A673 (cell line): ENCODE measurements at regions of chr19 and their contacts with region 1.

Region 1: DNA sequence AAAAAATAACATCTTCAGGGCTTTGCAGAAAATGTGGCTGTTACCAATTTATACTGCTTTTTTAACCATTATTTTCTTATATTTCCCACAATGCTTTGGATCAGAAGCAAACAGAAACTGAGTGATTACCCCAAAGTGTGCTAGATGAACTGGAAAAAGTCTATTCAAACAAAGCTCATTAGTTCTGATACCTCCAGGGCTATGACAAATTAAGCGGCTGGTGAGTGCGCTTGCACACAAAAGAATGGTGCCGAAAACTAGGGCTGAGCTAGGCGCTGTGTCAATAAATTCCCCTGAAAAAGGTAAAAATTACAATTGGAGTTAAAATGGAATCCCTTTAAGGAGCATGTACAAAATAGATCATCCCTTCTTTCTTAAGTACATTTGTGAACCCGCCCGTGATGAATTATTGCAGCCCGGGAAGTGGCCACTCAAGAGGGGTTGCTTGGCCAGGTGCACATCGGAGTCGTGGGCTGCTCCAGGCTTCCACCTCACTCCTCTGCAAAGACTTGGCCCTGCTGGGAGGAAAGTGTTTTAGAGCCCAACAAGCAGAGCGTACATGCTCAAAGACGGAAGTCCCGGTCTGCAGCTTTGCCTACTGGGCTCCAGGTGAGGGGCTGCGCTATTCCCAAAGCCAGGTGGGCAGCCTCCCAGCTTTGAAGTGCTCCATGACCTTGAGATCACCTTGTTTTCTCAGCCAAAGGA is 164.0 kb upstream of the ZNF507 start:
- DNase-seq: no peak
- H3K4me3 ChIP-seq: no peak overlapping the region
- H3K27ac ChIP-seq: no peak overlapping the region
- H3K4me1 ChIP-seq: no peaks in the 10 kb centered on the region
- H3K27me3 ChIP-seq: no peaks in the 10 kb centered on the region
- CTCF ChIP-seq: no peak

Region 2: DNA sequence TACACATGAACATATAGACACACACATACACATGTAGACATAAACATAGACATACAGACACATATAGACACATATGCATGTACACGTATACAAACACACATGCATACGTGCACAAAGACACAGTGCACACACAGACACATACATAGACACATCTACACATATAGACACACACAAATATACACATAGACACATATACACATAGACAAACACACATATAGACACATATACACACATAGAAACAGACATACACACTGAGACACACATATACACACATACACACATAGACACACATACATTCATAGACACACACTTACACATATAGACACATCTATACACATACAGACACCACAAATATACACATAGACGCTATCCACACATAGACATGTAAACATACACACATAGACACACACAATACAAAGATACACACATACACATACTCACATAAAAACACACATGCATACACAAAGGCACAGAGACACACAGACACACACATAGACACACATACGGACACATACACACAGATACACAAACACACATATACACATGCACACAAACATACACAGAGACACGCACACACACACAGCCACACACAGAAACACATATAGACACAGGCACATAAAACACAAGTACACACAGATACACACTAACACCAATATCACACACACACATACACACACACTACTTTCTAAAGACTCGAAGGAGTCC is 1086.1 kb before region 1 on chr19:
- CTCF ChIA-PET with region 1: interaction called, 10 read pairs
- POLR2A ChIA-PET with region 1: no interaction called
- intact Hi-C with region 1: no loop called
- DNase-seq: no peak
- H3K4me3 ChIP-seq: no peak overlapping the region
- H3K27ac ChIP-seq: no peak overlapping the region
- H3K4me1 ChIP-seq: peaks cover 6% of the 10 kb centered on the region
- H3K27me3 ChIP-seq: no peaks in the 10 kb centered on the region
- CTCF ChIP-seq: no peak

Region 3: DNA sequence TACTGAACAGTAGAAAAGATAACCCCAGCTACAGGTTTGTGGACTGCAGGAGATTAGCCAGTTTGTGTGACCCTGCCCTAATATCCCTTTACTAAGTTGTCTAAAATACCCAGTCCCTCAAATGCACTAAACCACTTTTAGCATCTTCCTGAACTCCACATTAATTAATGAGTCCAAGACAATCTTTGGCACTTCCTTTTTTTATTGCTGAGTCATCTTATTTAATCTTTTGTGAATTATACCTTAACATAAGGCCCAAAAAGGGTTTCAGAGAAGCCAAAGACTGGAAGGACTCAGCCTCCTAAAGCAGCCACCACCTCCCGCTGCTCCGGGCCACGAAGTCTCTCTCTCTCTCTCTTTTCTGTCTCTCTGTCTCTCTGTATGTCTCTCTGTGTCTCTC is 350.9 kb after region 1 on chr19:
- CTCF ChIA-PET with region 1: no interaction called
- POLR2A ChIA-PET with region 1: interaction called, 12 read pairs
- intact Hi-C with region 1: no loop called
- DNase-seq: no peak
- H3K4me3 ChIP-seq: no peak overlapping the region
- H3K27ac ChIP-seq: no peak overlapping the region
- H3K4me1 ChIP-seq: no peaks in the 10 kb centered on the region
- H3K27me3 ChIP-seq: no peaks in the 10 kb centered on the region
- CTCF ChIP-seq: no peak

Region 4: GRCh38 chr19:32595491-32595890 is 414.1 kb after region 1 on chr19:
- CTCF ChIA-PET with region 1: no interaction called
- POLR2A ChIA-PET with region 1: no interaction called
- intact Hi-C with region 1: no loop called
- DNase-seq: no peak
- H3K4me3 ChIP-seq: no peak overlapping the region
- H3K27ac ChIP-seq: no peak overlapping the region
- H3K4me1 ChIP-seq: no peaks in the 10 kb centered on the region
- H3K27me3 ChIP-seq: no peaks in the 10 kb centered on the region
- CTCF ChIP-seq: no peak